CD4-positive, alpha-beta memory T cell (primary cell): ENCODE measurements at regions of chr12 and their contacts with region 1.

Region 1: DNA sequence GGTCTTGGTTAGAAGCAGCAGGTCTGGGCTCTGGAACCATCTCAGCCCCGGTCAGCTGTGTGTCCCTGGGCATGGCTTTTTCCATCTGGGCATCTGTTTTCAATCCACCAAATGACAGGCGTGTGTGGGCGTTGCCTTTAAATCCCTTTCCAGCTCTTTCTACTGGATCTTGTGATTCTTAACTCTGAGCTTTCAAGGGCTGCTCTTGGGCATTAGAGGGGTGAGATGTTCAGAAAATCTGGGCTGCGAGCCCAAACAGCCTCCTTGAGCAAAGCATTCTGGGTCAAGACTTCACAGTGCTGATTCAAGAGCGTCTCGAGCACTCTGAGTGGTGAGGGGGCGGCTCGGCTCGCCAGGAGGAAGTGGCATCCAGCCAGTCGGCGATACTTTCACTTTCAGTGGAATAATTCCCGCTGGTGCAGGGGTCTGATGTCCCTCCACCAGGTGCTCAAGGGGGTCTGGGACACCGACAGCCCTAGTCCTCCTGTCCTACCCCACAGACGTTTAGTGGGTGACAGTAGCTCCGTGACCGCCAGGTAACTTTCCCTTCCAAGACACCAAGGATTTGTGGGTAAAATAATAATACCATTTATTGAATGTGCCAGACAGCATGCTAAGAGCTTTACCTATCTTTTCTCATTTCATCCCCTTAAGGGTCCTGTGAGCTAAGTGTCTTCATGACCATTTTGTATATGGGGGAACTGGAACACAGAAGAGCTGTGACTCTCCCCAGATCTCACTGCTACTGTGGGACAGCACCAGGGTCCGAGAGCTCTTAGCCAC is 114.0 kb downstream of the PLXNC1 start:
- DNase-seq: peak; percentile 71 to 82 (median 76)
- H3K4me3 ChIP-seq: peak overlapping the region; percentile 40 to 84
- H3K4me3 Mint-ChIP-seq: peak overlapping the region; percentile 95 to 98 (median 97)
- H3K27ac ChIP-seq: peak overlapping the region; percentile 74
- H3K27ac Mint-ChIP-seq: peak overlapping the region; percentile 97 to 99 (median 99)
- H3K4me1 ChIP-seq: peaks cover 28% of the 10 kb centered on the region
- H3K4me1 Mint-ChIP-seq: peaks cover 19 to 56% (median 33%) of the 10 kb centered on the region in 4 donors
- H3K27me3 ChIP-seq: no peaks in the 10 kb centered on the region
- H3K27me3 Mint-ChIP-seq: no peaks in the 10 kb centered on the region

Region 2: DNA sequence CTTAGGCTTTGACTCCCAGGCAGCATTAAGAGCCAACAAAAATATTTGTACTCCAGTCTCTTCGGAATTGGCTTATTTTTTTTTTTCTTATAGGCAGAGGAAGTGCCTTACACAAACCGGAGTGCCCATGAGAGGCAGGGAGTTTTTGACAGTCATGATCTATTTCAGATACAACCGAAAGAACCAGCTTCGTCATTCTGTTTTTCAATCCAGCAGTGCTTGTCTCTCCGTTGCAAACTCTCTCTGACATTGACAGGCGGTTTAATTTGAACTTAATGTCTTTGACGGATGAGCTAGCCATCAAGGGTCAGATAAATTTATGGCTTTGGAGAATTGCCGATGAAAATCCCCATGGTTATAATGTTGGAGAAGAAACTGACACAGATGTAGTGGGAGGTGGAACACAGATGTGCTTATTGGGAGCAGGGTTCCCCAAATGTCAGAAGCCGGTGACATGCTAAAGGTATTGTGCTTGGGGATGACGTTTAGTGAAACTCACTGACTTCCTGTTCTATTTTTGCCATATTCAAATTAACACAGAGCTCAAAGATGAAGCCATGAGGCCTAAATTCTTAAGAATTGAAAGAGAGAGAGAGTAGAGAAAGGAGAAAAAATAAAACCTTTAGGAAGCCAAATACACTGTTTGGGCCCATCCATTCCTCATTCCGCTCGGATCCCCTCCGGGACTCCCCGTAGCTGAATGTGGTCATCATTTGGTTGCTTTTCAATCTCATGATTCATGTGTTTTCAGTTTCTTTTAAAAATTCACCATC is 54.4 kb before region 1 on chr12:
- CTCF ChIA-PET with region 1: interaction called, 10 read pairs
- POLR2A ChIA-PET with region 1: interaction called, 30 read pairs
- intact Hi-C with region 1: loop called (anchors 1 kb)
- DNase-seq: peak; percentile 45 to 69 (median 56)
- H3K4me3 ChIP-seq: peak overlapping the region; percentile 25 to 51
- H3K4me3 Mint-ChIP-seq: peak overlapping the region; percentile 78 to 93 (median 84)
- H3K27ac ChIP-seq: peak overlapping the region; percentile 67
- H3K27ac Mint-ChIP-seq: peak overlapping the region; percentile 89 to 98 (median 96)
- H3K4me1 ChIP-seq: peaks cover 59% of the 10 kb centered on the region
- H3K4me1 Mint-ChIP-seq: peaks cover 47 to 68% (median 55%) of the 10 kb centered on the region in 4 donors
- H3K27me3 ChIP-seq: no peaks in the 10 kb centered on the region
- H3K27me3 Mint-ChIP-seq: no peaks in the 10 kb centered on the region

Region 3: DNA sequence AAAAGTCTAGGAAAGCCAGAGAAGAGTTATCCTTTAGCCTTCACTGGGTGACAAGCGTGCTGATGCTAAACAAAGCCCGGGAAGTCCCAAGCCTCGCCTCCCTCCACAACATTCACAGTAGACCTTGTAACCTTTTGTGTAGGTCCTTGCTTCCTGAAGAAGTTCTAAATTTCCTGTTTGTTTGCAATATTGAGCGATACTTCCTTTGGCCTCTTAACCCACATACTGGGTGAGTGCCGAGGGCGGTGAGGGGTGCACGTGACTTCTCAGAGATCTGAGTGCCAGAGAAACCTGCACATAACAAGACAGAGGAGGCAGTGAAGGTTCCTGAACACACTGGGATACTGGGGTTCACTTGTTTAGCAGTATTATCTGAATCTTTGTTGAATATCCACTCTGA is 20.3 kb after region 1 on chr12:
- CTCF ChIA-PET with region 1: no interaction called
- POLR2A ChIA-PET with region 1: interaction called, 35 read pairs
- intact Hi-C with region 1: loop called (anchors 2 kb)
- DNase-seq: peak; percentile 57 to 71 (median 66)
- H3K4me3 ChIP-seq: peak overlapping the region; percentile 5 to 17
- H3K4me3 Mint-ChIP-seq: peak overlapping the region; percentile 16 to 86 (median 78)
- H3K27ac ChIP-seq: peak overlapping the region; percentile 47
- H3K27ac Mint-ChIP-seq: peak overlapping the region; percentile 85 to 96 (median 94)
- H3K4me1 ChIP-seq: peaks cover 27% of the 10 kb centered on the region
- H3K4me1 Mint-ChIP-seq: peaks cover 30 to 33% (median 32%) of the 10 kb centered on the region in 4 donors
- H3K27me3 ChIP-seq: no peaks in the 10 kb centered on the region
- H3K27me3 Mint-ChIP-seq: no peaks in the 10 kb centered on the region